Activated CD4-positive, alpha-beta memory T cell treated with anti-CD3 and anti-CD28 coated beads, Interleukin-2, amount 10 ng/mL, durations not matched to agents 7 days and 5 days (primary cell): ENCODE measurements at regions of chr11 and their contacts with region 1.

Region 1: GRCh38 chr11:2298795-2299761 is 2.6 kb downstream of the C11orf21 start:
- DNase-seq: peak; percentile 24
- H3K4me3 Mint-ChIP-seq: peak overlapping the region; percentile 65
- H3K27ac Mint-ChIP-seq: peak overlapping the region; percentile 58
- H3K4me1 Mint-ChIP-seq: peaks cover 37% of the 10 kb centered on the region
- H3K27me3 Mint-ChIP-seq: no peaks in the 10 kb centered on the region

Region 2: DNA sequence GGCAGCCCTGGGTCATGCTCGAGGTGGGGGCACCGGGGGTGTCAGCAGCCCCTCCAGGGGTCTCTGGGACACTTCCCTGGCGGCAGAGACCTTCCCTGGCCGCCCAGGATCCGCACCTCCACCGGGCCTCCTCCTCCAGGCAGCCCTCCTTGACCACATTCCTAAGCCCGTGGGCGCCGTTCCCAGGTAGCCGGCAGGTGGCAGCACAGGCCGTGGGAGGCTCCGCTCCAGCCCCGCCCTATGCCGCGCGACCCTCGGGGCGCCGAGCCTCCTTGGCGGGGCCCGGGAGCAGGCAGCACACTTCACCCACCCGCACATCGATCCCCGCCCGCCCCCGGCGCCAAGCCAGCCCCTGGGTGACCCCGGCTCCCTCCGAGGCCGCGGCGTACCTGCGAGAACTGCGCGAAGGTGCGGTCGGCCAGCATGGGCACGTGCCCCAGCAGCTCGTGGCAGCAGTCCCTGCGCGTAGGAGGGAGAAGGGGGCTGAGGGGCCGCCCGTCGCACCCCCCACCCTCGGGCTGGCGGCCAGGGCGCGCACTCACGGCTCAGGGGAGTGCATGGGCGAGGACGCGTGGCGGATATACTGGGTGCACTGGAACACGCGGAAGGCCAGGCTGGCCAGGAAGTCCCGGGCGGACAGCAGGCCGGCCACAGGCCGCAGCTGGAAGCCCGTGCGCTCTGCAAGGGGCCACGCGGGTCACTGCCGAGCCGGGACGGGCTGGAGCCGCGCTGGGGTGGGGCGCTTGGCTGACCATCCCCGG is 132.8 kb before region 1 on chr11:
- CTCF ChIA-PET with region 1: no interaction called
- POLR2A ChIA-PET with region 1: no interaction called
- DNase-seq: peak; percentile 42
- H3K4me3 Mint-ChIP-seq: no peak overlapping the region
- H3K27ac Mint-ChIP-seq: no peak overlapping the region
- H3K4me1 Mint-ChIP-seq: no peaks in the 10 kb centered on the region
- H3K27me3 Mint-ChIP-seq: no peaks in the 10 kb centered on the region

Region 3: GRCh38 chr11:2287091-2287490 is 12.0 kb before region 1 on chr11:
- CTCF ChIA-PET with region 1: no interaction called
- POLR2A ChIA-PET with region 1: no interaction called
- DNase-seq: no peak
- H3K4me3 Mint-ChIP-seq: no peak overlapping the region
- H3K27ac Mint-ChIP-seq: no peak overlapping the region
- H3K4me1 Mint-ChIP-seq: peaks cover 4% of the 10 kb centered on the region
- H3K27me3 Mint-ChIP-seq: peaks cover 23% of the 10 kb centered on the region

Region 4: GRCh38 chr11:2312232-2313042 is 13.4 kb after region 1 on chr11:
- CTCF ChIA-PET with region 1: interaction called, 6 read pairs
- POLR2A ChIA-PET with region 1: interaction called, 21 read pairs
- DNase-seq: no peak
- H3K4me3 Mint-ChIP-seq: no peak overlapping the region
- H3K27ac Mint-ChIP-seq: no peak overlapping the region
- H3K4me1 Mint-ChIP-seq: peaks cover 2% of the 10 kb centered on the region
- H3K27me3 Mint-ChIP-seq: no peaks in the 10 kb centered on the region